ENCODE measurements at regions of chr12 and their contacts with region 1.

Region 1: GRCh38 chr12:16891673-16892072 is 285.7 kb upstream of the LMO3 start:
- DNase-seq: no peak

Region 2: GRCh38 chr12:16844875-16845274 is 46.8 kb before region 1 on chr12:
- intact Hi-C with region 1: loop called in 1 of 2 experiments (anchors 1 kb)
- DNase-seq: no peak

Region 3: GRCh38 chr12:18521284-18521860 is 1629.7 kb after region 1 on chr12:
- intact Hi-C with region 1: no loop called
- DNase-seq: peak; percentile 53